MCF 10A (cell line): ENCODE measurements at regions of chr10 and their contacts with region 1.

Region 1: DNA sequence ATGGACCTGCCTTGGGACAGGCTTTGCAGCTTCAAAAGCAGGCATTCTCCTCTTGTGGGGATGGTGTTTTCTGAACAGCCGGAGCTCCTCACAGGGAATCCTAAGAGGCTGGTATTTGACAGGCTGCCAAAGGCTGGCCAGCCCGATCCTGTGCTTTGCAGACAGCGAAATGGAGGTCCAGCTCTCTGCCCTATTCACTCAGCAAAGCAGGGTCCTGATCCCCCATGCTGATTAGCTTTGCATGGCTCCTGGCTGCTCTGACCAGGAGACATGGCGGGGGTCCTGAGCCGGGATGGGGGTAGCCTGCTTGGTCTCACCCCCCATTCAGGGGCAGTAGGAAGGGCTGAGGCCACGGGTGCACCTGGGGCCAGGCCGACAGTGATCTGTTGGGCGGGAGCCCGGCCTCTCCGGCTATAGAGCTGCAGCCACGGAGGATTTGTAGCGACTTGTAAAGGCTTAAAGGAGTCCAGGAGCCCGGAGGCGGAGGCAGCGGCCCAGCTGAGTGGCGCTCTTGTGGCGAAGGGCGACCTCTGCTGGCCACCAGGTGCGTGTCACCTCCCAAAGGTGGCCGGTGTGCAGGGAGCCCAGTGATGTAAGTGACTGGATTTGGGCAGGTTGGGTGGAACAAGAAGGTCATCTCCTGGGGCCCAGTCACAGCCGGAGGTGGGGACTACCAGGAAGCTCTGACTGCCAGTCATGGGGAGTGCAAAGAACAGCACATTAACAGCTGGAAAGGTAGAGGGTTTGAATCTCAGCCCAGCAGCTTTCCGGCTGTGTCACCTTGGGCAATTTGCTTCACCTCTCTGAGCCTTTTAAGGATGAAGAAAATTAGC is 126.5 kb downstream of the ZMIZ1 start:
- DNase-seq: peak; percentile 87
- H3K4me3 Mint-ChIP-seq: no peak overlapping the region
- H3K27ac Mint-ChIP-seq: no peak overlapping the region
- H3K4me1 Mint-ChIP-seq: peaks cover 27% of the 10 kb centered on the region
- H3K27me3 Mint-ChIP-seq: no peaks in the 10 kb centered on the region
- CTCF ChIP-seq: peak; percentile 96

Region 2: GRCh38 chr10:78047314-78047891 is 1147.9 kb before region 1 on chr10:
- CTCF ChIA-PET with region 1: interaction called, 78 read pairs
- POLR2A ChIA-PET with region 1: interaction called, 3 read pairs
- intact Hi-C with region 1: loop called (anchors 2 kb)
- DNase-seq: peak; percentile 79
- H3K4me3 Mint-ChIP-seq: no peak overlapping the region
- H3K27ac Mint-ChIP-seq: no peak overlapping the region
- H3K4me1 Mint-ChIP-seq: peaks cover 13% of the 10 kb centered on the region
- H3K27me3 Mint-ChIP-seq: no peaks in the 10 kb centered on the region
- CTCF ChIP-seq: peak; percentile 81

Region 3: DNA sequence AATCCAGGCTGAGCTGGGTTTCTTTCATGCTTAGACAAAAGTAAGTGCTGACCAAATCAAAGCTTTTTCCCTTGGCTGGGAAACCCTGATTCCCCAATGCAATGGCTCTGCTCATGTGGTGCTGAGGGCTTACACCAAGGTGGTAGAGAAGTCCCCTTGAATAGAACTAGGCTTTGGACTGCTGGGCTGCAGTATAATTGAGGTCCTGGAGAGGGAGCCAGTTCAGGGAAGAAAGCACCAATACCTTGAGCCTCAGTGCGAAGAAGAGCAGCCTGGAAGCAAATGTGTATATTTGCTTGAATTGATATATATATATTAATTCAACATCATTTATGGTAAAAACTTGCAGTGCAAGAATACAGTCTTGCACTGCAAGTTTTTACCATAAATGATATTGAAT is 770.6 kb before region 1 on chr10:
- CTCF ChIA-PET with region 1: interaction called, 11 read pairs
- POLR2A ChIA-PET with region 1: interaction called, 3 read pairs
- intact Hi-C with region 1: loop called (anchors 1 kb)
- DNase-seq: peak; percentile 42
- H3K4me3 Mint-ChIP-seq: no peak overlapping the region
- H3K27ac Mint-ChIP-seq: no peak overlapping the region
- H3K4me1 Mint-ChIP-seq: no peaks in the 10 kb centered on the region
- H3K27me3 Mint-ChIP-seq: peaks cover 50% of the 10 kb centered on the region
- CTCF ChIP-seq: peak; percentile 49

Region 4: DNA sequence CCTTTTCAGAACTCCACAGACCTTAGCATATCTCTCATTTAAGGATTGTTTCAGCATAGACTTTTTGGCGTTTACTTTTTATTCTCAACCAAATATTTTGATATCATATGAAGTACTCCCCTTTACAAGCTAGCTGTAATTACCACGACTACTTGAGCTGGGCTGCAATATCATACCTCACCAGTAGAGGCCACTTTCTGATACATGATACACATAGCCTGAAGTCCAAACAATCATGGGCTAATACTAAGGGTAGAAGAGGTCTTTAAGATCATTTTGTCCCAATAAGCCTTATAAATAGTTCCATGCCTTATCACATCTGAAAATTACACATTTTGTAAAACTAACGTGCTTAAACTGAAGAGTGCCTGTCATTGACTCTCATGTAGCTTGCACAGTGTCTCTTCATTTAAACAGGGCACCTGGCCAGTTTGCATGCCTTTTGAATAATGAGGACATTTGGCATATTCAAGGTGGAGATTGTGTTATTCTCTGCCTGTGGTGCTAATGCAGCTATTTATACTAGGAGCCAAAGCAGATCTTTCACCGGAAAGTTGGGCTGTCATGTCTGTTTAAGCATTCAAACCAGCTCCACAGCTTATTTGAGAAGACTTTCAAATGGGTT is 530.3 kb before region 1 on chr10:
- CTCF ChIA-PET with region 1: interaction called, 6 read pairs
- POLR2A ChIA-PET with region 1: no interaction called
- intact Hi-C with region 1: loop called (anchors 2 kb)
- DNase-seq: peak; percentile 44
- H3K4me3 Mint-ChIP-seq: no peak overlapping the region
- H3K27ac Mint-ChIP-seq: no peak overlapping the region
- H3K4me1 Mint-ChIP-seq: no peaks in the 10 kb centered on the region
- H3K27me3 Mint-ChIP-seq: peaks cover 61% of the 10 kb centered on the region
- CTCF ChIP-seq: peak; percentile 40

Region 5: DNA sequence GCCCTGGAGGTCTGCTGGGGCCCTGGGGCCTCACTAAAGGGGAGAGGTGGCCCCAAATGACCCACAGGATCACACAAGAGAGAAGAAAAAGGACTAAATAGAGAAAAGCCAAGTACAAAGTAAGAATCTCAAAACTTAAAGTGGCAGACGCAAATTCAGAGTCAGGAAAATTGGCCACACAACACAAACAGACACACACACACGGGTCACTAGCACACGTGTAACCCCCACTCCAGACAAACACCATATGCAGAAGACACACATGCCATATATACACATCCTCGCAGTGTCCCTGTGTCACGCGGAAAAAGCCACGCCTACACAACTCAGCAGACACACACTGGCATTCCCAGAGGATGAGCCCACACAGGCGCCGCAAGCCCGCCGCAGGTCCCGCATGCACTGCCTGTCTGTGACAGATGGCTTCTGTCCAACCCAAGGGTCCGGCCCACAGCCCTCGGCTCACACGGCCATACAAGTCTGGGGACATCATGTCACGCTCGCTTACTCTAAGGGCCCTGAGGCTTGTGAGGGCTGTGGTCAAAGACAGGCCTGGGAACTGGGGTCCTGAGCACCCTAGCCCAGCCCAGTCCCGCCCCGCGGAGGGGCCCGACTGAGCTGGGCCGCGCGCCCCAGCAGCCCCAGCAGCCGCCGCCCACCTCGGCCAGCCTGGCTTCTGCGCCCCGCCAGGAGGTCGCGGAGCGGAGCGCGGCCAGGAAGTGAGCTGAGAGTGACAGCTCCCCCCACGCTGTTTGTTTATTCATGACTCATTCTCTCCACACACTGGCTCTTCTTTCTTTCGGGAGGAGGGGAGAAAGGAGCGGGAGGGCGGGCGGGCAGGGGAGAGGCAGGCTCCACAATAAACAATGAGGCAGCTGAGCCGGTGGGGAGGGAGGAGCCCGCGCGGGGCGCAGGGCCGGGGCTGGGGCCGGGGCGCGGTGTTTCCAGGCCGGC is 222.1 kb before region 1 on chr10:
- CTCF ChIA-PET with region 1: interaction called, 7 read pairs
- POLR2A ChIA-PET with region 1: interaction called, 3 read pairs
- intact Hi-C with region 1: loop called (anchors 10 kb)
- DNase-seq: peak; percentile 93
- H3K4me3 Mint-ChIP-seq: peak overlapping the region; percentile 78
- H3K27ac Mint-ChIP-seq: peak overlapping the region; percentile 51
- H3K4me1 Mint-ChIP-seq: peaks cover 36% of the 10 kb centered on the region
- H3K27me3 Mint-ChIP-seq: no peaks in the 10 kb centered on the region
- CTCF ChIP-seq: no peak

Region 6: GRCh38 chr10:79112881-79113431 is 82.4 kb before region 1 on chr10:
- CTCF ChIA-PET with region 1: no interaction called
- POLR2A ChIA-PET with region 1: no interaction called
- intact Hi-C with region 1: no loop called
- DNase-seq: peak; percentile 93
- H3K4me3 Mint-ChIP-seq: no peak overlapping the region
- H3K27ac Mint-ChIP-seq: peak overlapping the region; percentile 93
- H3K4me1 Mint-ChIP-seq: peaks cover 56% of the 10 kb centered on the region
- H3K27me3 Mint-ChIP-seq: no peaks in the 10 kb centered on the region
- CTCF ChIP-seq: no peak

Region 7: GRCh38 chr10:79127151-79127961 is 68.0 kb before region 1 on chr10:
- CTCF ChIA-PET with region 1: interaction called, 9 read pairs
- POLR2A ChIA-PET with region 1: no interaction called
- intact Hi-C with region 1: loop called (anchors 1 kb)
- DNase-seq: peak; percentile 97
- H3K4me3 Mint-ChIP-seq: no peak overlapping the region
- H3K27ac Mint-ChIP-seq: no peak overlapping the region
- H3K4me1 Mint-ChIP-seq: peaks cover 13% of the 10 kb centered on the region
- H3K27me3 Mint-ChIP-seq: no peaks in the 10 kb centered on the region
- CTCF ChIP-seq: no peak

Region 8: GRCh38 chr10:79162861-79163665 is 32.2 kb before region 1 on chr10:
- CTCF ChIA-PET with region 1: interaction called, 10 read pairs
- POLR2A ChIA-PET with region 1: no interaction called
- intact Hi-C with region 1: no loop called
- DNase-seq: peak; percentile 86
- H3K4me3 Mint-ChIP-seq: no peak overlapping the region
- H3K27ac Mint-ChIP-seq: peak overlapping the region; percentile 43
- H3K4me1 Mint-ChIP-seq: peaks cover 22% of the 10 kb centered on the region
- H3K27me3 Mint-ChIP-seq: no peaks in the 10 kb centered on the region
- CTCF ChIP-seq: no peak